Naive thymus-derived CD4-positive, alpha-beta T cell (primary cell): ENCODE measurements at regions of chr1 and their contacts with region 1.

Region 1: GRCh38 chr1:110209715-110210603 is at the start of gene KCNC4:
- DNase-seq: peak; percentile 80 to 93 (median 91)
- ATAC-seq: peak; percentile 93
- H3K4me3 ChIP-seq: peak within 1 kb of the TSS; percentile 72
- H3K4me3 Mint-ChIP-seq: peak within 1 kb of the TSS; percentile 86 to 94 (median 88)
- H3K27ac ChIP-seq: peak within 1 kb of the TSS; percentile 89
- H3K27ac Mint-ChIP-seq: peak within 1 kb of the TSS; percentile 88 to 98 (median 95)
- H3K4me1 ChIP-seq: peaks cover 7 to 20% of the 10 kb centered on the region in 2 donors
- H3K4me1 Mint-ChIP-seq: peaks cover 31 to 61% (median 42%) of the 10 kb centered on the region in 7 donors
- H3K27me3 ChIP-seq: no peaks in the 10 kb centered on the region
- H3K27me3 Mint-ChIP-seq: peaks cover 0 to 16% (median 0%) of the 10 kb centered on the region in 5 donors
- total RNA-seq, gene KCNC4: 5.8 to 18.2 (median 12.4) TPM

Region 2: DNA sequence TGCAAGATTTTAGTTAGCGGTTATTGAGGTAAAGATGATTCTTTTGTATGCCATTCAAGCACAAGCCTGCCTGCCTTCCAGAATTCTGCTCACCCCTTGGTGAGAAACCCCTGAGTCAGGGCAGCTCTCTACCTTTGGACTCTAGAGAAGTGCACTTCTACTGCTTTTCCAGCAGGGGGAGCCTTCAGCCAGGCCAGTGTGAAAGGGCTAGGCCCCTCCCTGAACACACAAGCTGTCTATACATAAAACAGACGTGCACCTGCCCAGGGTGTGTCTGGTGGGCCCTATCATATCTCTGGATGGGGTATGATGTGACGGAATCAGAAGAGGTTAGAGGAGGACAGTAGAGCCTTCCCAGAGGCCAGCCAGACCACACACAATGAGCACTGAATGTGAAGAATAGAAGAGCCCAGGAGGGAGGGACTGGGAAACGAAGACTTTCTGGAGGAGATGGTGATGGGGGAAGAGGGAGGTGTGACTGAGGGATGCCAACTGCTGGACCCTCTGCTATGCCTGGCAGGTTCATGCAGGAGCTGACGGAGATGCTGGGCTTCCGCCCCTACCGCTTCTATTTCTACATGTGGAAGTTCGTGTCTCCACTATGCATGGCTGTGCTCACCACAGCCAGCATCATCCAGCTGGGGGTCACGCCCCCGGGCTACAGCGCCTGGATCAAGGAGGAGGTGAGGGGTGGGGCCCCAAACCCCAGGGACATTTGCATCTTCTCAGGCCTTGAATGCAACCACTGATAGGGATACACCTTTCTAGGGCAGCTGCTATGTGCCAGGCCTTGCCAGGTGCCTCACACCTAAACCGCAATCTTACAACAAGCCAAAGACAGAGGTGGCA is 12.8 kb before region 1 on chr1:
- CTCF ChIA-PET with region 1: interaction called, 17 read pairs
- POLR2A ChIA-PET with region 1: interaction called, 4 read pairs
- intact Hi-C with region 1: no loop called
- DNase-seq: peak; percentile 34 to 77 (median 57)
- ATAC-seq: peak; percentile 91
- H3K4me3 ChIP-seq: no peak overlapping the region
- H3K4me3 Mint-ChIP-seq: no peak overlapping the region
- H3K27ac ChIP-seq: no peak overlapping the region
- H3K27ac Mint-ChIP-seq: no peak overlapping the region
- H3K4me1 ChIP-seq: no peaks in the 10 kb centered on the region
- H3K4me1 Mint-ChIP-seq: peaks cover 0 to 6% (median 0%) of the 10 kb centered on the region in 7 donors
- H3K27me3 ChIP-seq: no peaks in the 10 kb centered on the region
- H3K27me3 Mint-ChIP-seq: no peaks in the 10 kb centered on the region

Region 3: DNA sequence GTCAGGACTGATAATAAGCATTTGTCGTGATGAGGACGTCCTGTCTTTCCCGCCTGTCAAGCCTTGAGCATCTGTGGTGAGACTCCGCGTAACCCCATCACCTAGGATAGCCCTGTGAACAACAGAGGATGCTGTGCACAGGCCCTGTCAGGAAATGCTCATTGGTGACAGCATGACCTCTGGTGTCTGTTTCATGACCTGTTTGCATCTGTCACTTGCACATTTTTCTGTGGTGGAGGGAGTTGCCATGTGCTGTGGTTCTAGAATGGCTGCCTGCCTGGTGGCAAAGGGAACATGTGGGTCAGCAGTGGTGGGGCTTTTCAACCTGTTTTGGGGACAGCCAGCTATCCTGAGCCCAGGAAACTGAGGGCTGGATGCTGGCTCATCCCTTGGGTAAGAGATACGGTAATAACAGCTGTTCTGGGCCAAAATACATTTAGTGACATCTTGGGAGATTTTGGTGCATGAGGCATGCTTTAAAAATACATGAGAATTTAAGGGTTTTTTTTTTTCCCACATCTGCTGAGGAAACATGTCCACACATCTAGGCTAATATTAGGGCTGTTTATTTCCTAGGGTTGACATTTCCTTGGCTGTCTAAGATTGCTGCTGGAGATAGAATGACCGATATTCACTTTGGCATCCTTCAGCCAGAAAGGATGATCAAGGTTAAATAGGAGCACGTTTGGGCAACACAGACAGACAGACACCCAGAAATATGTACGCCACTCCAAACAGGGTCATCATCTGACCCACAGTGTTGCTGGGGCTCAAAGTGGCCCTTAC is 53.1 kb after region 1 on chr1:
- CTCF ChIA-PET with region 1: interaction called, 3 read pairs
- POLR2A ChIA-PET with region 1: interaction called, 3 read pairs
- intact Hi-C with region 1: loop called (anchors 2 to 5 kb)
- DNase-seq: peak in 3 of 9 donors; percentile 3 to 10 (median 4)
- ATAC-seq: no peak
- H3K4me3 ChIP-seq: no peak overlapping the region
- H3K4me3 Mint-ChIP-seq: no peak overlapping the region
- H3K27ac ChIP-seq: no peak overlapping the region
- H3K27ac Mint-ChIP-seq: peak overlapping the region in 1 of 9 donors; percentile 53
- H3K4me1 ChIP-seq: no peaks in the 10 kb centered on the region
- H3K4me1 Mint-ChIP-seq: peaks cover 0 to 4% (median 0%) of the 10 kb centered on the region in 7 donors
- H3K27me3 ChIP-seq: no peaks in the 10 kb centered on the region
- H3K27me3 Mint-ChIP-seq: peaks cover 0 to 12% (median 5%) of the 10 kb centered on the region in 5 donors

Region 4: GRCh38 chr1:110460253-110461220 is 250.6 kb after region 1 on chr1:
- CTCF ChIA-PET with region 1: interaction called, 64 read pairs
- POLR2A ChIA-PET with region 1: interaction called, 8 read pairs
- intact Hi-C with region 1: loop called in 1 of 2 experiments (anchors 1 kb)
- DNase-seq: peak; percentile 66 to 91 (median 83)
- ATAC-seq: peak; percentile 96
- H3K4me3 ChIP-seq: no peak overlapping the region
- H3K4me3 Mint-ChIP-seq: no peak overlapping the region
- H3K27ac ChIP-seq: no peak overlapping the region
- H3K27ac Mint-ChIP-seq: no peak overlapping the region
- H3K4me1 ChIP-seq: no peaks in the 10 kb centered on the region
- H3K4me1 Mint-ChIP-seq: no peaks in the 10 kb centered on the region
- H3K27me3 ChIP-seq: no peaks in the 10 kb centered on the region
- H3K27me3 Mint-ChIP-seq: no peaks in the 10 kb centered on the region

Region 5: DNA sequence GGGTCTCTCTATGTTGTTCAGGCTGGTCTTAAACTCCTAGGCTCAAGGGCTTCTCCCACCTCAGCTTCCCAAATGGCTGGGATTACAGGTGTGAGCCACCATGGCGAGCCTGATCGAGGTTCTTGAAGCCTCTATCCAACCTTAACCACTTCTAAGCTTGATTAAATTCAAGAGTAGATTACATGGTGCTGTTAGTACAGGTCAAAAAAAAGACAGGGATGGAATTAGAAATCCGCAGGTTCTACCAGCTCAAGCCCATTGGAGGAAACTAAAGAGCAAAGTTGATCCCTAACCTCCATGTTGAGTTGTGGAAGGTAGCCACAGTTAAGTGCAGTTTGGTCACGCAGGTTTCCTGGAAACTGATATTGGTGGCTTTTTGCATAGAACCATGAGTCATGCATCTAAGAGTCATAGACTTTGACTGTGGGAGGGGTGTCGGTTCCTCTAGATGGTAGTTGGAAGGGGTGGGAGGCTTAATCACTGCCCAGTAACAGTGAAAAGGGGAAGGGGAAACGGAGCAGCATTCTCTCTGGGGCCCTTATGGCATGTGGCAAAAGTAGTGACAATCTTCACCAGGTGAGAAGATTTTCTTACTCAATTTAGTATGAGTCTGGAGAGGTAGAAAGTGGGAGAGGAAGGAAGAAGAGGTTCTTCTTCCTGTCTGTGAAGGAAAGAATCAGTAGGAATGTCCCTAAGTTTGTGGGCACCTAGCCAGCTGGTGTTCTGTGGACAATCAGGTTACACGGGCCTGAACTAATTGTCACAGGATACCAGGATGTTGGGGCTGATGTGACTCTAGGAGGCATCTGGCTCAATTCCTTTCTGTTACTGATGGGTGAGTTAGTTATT is 670.0 kb after region 1 on chr1:
- CTCF ChIA-PET with region 1: no interaction called
- POLR2A ChIA-PET with region 1: no interaction called
- intact Hi-C with region 1: loop called in 1 of 2 experiments (anchors 5 kb)
- DNase-seq: peak in 2 of 9 donors; percentile 63 to 65
- ATAC-seq: peak; percentile 73
- H3K4me3 ChIP-seq: peak overlapping the region; percentile 41
- H3K4me3 Mint-ChIP-seq: peak overlapping the region; percentile 78 to 96 (median 88)
- H3K27ac ChIP-seq: peak overlapping the region; percentile 44
- H3K27ac Mint-ChIP-seq: peak overlapping the region; percentile 89 to 99 (median 93)
- H3K4me1 ChIP-seq: peaks cover 69 to 77% of the 10 kb centered on the region in 2 donors
- H3K4me1 Mint-ChIP-seq: peaks cover 71 to 96% (median 85%) of the 10 kb centered on the region in 7 donors
- H3K27me3 ChIP-seq: no peaks in the 10 kb centered on the region
- H3K27me3 Mint-ChIP-seq: no peaks in the 10 kb centered on the region